IMR-90 (cell line): ENCODE measurements at regions of chr21 and their contacts with region 1.

Region 1: GRCh38 chr21:28325618-28326017 is 667.1 kb downstream of the LTN1 start:
- DNase-seq: no peak
- ATAC-seq: no peak
- H3K4me3 ChIP-seq: no peak overlapping the region
- H3K27ac ChIP-seq: no peak overlapping the region
- H3K4me1 ChIP-seq: no peaks in the 10 kb centered on the region
- H3K27me3 ChIP-seq: no peaks in the 10 kb centered on the region
- CTCF ChIP-seq: no peak
- POLR2A ChIP-seq: no peak
- RAD21 ChIP-seq: no peak

Region 2: DNA sequence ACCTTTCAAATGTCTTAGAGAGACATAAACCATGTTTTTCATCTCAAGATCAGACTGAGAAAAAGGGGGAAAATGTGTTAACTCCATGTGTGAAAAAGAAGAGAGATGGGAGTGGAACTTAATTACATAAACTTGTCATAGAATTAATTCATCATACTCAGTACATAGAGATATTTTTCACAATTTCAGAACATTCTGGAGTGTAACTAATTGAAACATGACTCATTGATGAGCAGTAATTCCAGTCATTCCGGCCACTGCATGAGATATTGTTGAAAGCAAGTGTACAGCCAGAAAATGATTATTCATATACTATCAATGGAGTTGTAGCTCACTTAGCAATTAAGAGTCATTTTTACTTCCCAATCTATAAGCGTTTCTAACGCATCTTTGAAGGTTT is 72.3 kb before region 1 on chr21:
- CTCF ChIA-PET with region 1: no interaction called
- POLR2A ChIA-PET with region 1: no interaction called
- dilution Hi-C with region 1: no loop called
- in situ Hi-C with region 1: no loop called
- intact Hi-C with region 1: loop called (anchors 10 kb)
- DNase-seq: peak; percentile 62
- ATAC-seq: peak; percentile 79
- H3K4me3 ChIP-seq: no peak overlapping the region
- H3K27ac ChIP-seq: peak overlapping the region; percentile 70; the same call in 1 of the 2 replicates
- H3K4me1 ChIP-seq: peaks cover 9% of the 10 kb centered on the region
- H3K27me3 ChIP-seq: no peaks in the 10 kb centered on the region
- CTCF ChIP-seq: no peak
- POLR2A ChIP-seq: no peak
- RAD21 ChIP-seq: no peak

Region 3: GRCh38 chr21:28374881-28375280 is 49.3 kb after region 1 on chr21:
- CTCF ChIA-PET with region 1: no interaction called
- POLR2A ChIA-PET with region 1: no interaction called
- dilution Hi-C with region 1: no loop called
- in situ Hi-C with region 1: no loop called
- intact Hi-C with region 1: no loop called
- DNase-seq: no peak
- ATAC-seq: no peak
- H3K4me3 ChIP-seq: no peak overlapping the region
- H3K27ac ChIP-seq: no peak overlapping the region
- H3K4me1 ChIP-seq: peaks cover 4% of the 10 kb centered on the region
- H3K27me3 ChIP-seq: no peaks in the 10 kb centered on the region
- CTCF ChIP-seq: no peak
- POLR2A ChIP-seq: no peak
- RAD21 ChIP-seq: no peak